ENCODE measurements at regions of chr20 and their contacts with region 1.

Region 1: DNA sequence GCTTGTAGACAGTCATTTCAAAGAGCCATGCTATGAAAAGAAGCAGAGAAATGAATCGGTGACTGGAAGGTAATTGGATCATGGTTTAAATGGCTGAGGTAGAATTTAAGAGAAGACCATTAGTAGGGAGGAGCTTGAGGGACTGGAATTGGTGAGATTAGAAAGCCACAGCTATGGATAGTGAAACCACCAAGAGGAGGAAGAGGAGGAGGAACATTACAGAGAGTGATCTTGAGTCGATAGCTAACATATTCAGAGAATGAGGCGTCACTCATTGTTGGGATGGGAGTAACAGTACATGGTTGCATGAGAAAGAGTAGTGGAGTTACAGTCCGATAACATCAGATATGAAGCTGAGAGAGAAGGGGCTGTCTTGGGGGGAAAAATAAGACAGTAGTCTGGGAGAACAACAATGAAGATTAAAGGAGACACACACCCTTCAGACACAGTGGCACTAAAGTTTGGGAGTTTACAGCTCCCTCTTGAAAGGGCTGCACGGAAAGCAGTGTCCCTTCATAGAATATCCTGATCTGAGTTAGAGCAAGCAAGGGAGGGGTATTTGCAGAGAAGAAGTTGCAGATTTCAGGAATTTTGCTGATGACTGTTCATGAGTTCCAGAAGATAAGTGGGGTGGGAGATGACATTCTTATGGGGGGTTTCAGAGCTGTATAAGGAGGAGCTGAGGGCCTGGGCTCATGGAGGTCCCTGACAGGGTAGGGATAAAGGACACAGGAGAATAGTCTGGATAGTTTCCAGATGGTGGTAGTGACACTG is 15.1 kb upstream of the LAMP5 start:
- DNase-seq: no peak
- ATAC-seq: no peak
- H3K4me3 ChIP-seq: no peak overlapping the region
- H3K27ac ChIP-seq: no peak overlapping the region
- H3K4me1 ChIP-seq: peaks cover 0 to 23% (median 0%) of the 10 kb centered on the region in 12 donors
- H3K27me3 ChIP-seq: no peaks in the 10 kb centered on the region
- CTCF ChIP-seq: no peak
- POLR2A ChIP-seq: no peak

Region 2: GRCh38 chr20:9517297-9518162 is 18.2 kb after region 1 on chr20:
- intact Hi-C with region 1: loop called in 1 of 10 experiments (anchors 1 kb)
- DNase-seq: no peak
- ATAC-seq: no peak
- H3K4me3 ChIP-seq: no peak overlapping the region
- H3K27ac ChIP-seq: no peak overlapping the region
- H3K4me1 ChIP-seq: peaks cover 0 to 30% (median 19%) of the 10 kb centered on the region in 12 donors
- H3K27me3 ChIP-seq: peaks cover 4 to 91% (median 47%) of the 10 kb centered on the region in 9 donors
- CTCF ChIP-seq: no peak
- POLR2A ChIP-seq: no peak

Measured in heart left ventricle (tissue), 16 donors.